Cardiac septum (tissue), 1 donor: ENCODE measurements at regions of chrX and their contacts with region 1.

Region 1: DNA sequence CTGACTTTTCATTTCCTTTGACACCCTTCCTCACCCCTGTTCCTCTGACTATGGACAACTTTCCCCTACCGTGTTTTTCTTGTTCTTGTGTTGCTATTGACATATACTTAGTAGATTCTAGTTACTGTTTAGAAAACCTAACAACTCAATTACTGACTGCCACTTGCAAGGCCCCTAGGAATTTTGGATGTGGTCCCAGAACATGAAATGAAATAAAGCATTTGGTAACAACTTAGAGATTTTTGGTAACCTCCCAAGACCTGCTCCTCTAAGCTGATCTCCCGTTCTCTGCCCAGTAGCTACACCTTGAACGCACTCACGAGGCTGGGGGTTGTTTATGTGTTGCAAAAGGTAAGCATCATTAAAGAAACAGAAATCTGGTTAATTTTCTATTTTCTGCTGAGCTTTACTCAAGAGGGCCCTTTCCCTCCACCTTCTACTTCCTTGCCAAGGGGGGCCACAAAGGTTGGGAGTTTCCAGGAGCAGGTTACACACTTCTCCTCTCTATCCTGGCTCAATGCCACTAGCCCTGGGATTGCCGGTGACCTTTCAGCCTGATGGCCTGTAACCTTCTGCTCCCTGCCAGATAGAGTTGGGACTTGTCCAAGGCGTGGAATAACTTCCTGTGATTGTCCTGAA is 20.5 kb downstream of the GAB3 start:
- DNase-seq: no peak

Region 2: DNA sequence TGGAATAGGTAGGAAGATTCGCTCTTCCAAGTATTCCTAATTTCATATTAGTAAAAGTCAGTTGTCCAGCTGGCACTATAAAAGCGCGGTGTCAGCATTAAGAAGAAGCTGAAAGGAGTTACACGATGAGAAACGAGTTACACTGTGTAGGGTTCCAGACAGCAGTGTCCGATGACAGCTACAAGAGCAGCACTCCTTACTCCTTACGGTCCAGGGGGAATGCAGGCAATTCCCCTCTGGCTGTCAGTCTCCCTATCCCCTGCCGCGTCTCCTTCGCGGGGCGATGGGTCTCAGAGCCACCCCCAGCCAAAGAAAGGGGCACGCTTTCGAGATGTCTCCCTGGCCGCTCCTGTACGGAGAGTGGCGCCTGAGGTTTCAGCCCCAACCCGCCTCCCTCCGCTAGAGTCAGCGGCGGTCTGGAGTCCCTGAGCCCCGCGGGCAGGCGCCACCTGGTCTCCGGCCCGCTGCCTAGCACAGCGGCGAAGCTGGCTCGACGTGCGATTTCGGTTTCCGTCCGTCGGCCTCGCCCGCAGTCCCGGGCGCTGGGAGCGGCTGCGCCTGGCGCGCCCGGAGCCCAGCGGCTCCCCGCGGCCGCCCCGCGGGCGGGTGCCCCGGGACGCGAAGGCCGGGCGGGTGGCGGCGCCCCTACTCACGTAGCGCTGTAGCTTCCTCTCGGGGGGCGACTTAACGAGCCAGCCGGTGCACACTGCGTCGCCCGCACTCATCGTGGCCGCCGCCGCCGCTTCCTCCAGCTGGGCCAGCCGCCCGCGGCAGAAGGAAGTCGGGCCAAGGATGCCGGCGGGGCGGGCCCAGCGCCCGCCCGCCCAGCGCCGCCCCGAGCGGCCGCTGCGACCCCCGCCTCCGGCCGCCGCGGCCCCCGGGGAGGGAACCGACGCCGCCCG is 20.2 kb after region 1 on chrX and contains the start of gene GAB3:
- intact Hi-C with region 1: loop called (anchors 2 kb)
- DNase-seq: peak; percentile 79
- total RNA-seq, gene GAB3: 17.7 TPM

Region 3: DNA sequence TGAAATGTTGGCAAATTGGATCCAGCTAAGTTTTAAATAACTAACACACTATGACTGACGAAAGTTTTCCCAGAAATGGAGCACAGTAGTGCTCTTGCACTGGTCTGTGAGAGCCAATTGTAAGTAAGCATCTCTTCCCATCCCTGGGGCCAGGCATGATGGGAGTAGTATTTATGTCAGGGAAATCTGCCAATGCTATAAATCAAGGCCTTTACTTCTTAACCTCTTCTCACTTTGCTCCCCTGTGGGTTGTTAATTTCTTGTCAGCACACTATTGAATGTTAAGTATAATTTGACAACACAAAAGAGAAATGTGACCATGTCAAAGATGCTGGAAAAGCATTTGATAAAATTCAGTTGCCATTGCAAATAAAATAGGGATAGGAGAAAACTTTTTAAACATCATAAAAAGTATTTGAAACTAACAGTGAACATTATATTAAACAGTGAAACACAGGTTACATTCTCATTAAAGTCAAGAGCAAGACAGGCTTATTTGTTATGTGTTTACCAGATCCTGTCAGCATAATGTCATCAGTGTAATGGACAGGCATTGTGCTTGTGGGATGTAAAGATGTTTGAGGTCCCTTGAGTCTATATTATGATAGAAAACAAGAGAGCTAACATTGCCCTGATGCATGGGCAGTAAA is 160.7 kb after region 1 on chrX:
- intact Hi-C with region 1: no loop called
- DNase-seq: no peak

Region 4: DNA sequence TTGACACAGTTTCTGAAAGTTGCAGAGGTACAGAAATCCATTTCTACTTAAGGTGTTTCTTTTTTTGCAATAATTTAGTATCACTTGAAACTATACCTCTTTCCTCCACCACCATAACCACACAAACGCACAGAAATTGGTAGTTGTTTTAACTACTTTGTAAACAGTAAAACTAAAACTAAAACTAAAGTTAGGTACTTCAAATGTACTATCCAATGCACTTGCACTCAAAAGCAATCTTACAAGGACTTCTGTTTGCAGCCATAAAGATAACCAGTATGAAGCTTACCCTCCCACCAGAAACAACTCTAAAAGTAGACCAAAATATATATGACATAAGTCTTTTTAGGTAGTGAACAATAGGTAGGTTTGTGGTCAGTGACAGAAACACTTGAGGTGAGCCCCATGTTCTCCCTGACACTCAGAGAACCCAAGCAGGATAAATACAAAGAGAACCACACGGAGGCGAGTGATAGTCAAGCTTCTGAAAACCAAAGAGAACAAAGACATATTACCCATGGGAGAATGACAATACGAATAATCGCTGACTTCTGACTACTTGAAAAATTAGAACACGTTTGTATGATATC is 413.7 kb after region 1 on chrX:
- intact Hi-C with region 1: no loop called
- DNase-seq: no peak